ENCODE measurements at regions of chr3 and their contacts with region 1.

Region 1: DNA sequence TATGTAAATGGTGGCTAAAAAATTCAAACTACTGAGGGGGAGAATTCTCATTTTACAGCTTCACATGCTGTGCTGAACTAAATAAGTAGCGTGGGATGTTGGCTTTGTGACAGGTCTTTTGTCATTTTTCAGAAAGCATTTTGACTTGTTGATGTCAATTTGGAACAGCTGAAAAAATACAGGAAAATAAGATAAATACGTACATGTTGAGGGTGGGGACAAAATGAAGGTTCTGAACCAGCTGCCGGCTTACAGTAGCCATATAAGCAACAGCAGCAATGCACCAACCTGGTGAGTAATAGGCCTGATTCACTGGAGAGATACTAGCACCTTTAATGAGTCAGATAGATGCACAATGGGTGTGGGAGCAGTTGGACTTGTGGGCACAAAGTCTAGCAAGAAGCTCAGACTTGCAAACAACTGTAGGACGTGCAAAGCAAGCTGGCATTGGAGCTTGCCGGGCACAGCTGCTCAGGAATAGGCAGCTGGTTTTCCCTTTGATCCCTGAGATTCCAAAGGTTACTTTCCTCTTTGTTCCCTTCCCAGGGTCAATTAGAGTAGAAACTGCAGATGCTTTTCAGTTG is 12.9 kb downstream of the B3GNT5 start:
- DNase-seq: peak; percentile 75
- ATAC-seq: peak; percentile 98
- H3K4me3 Mint-ChIP-seq: no peak overlapping the region
- H3K27ac Mint-ChIP-seq: no peak overlapping the region
- H3K4me1 Mint-ChIP-seq: peaks cover 2% of the 10 kb centered on the region
- H3K27me3 Mint-ChIP-seq: no peaks in the 10 kb centered on the region

Region 2: GRCh38 chr3:182837855-182838454 is 428.0 kb before region 1 on chr3:
- CTCF ChIA-PET with region 1: no interaction called
- POLR2A ChIA-PET with region 1: no interaction called
- intact Hi-C with region 1: no loop called
- DNase-seq: no peak
- ATAC-seq: no peak
- H3K4me3 Mint-ChIP-seq: no peak overlapping the region
- H3K27ac Mint-ChIP-seq: no peak overlapping the region
- H3K4me1 Mint-ChIP-seq: peaks cover 6% of the 10 kb centered on the region
- H3K27me3 Mint-ChIP-seq: no peaks in the 10 kb centered on the region

Region 3: GRCh38 chr3:183158551-183159006 is 107.3 kb before region 1 on chr3:
- CTCF ChIA-PET with region 1: no interaction called
- POLR2A ChIA-PET with region 1: no interaction called
- intact Hi-C with region 1: loop called in 1 of 2 experiments (anchors 1 kb)
- DNase-seq: peak; percentile 68
- ATAC-seq: peak; percentile 64
- H3K4me3 Mint-ChIP-seq: no peak overlapping the region
- H3K27ac Mint-ChIP-seq: peak overlapping the region; percentile 62
- H3K4me1 Mint-ChIP-seq: peaks cover 34% of the 10 kb centered on the region
- H3K27me3 Mint-ChIP-seq: no peaks in the 10 kb centered on the region

Region 4: DNA sequence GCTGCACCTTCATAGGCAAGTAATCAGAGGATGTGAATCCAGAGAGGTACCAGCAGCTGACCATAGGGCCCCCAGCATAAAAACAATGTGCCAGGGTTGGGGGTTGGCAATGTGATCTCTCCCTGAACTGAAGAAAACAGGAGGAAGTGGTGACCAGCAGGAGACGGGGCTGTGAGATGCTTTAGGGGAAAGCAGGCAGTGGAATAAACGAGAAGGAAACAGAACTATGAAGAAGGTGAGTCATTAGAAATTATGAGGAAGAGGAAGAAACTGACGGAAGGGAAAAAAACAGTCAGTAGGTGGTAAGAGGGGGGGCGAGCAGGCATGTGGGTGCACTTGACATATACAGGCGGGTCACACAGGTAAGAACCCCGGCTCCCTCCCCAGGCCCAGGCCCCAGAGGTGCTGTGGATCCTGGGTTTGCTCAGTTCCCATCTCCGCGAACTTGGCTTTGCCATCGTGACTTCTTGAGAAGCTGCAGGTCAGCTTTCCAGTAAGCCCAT is 55.0 kb before region 1 on chr3:
- CTCF ChIA-PET with region 1: interaction called, 4 read pairs
- POLR2A ChIA-PET with region 1: no interaction called
- intact Hi-C with region 1: loop called (anchors 1 to 5 kb)
- DNase-seq: peak; percentile 68
- ATAC-seq: peak; percentile 66
- H3K4me3 Mint-ChIP-seq: no peak overlapping the region
- H3K27ac Mint-ChIP-seq: peak overlapping the region; percentile 72
- H3K4me1 Mint-ChIP-seq: peaks cover 63% of the 10 kb centered on the region
- H3K27me3 Mint-ChIP-seq: no peaks in the 10 kb centered on the region

Region 5: GRCh38 chr3:183224180-183224970 is 41.6 kb before region 1 on chr3:
- CTCF ChIA-PET with region 1: interaction called, 3 read pairs
- POLR2A ChIA-PET with region 1: no interaction called
- intact Hi-C with region 1: loop called (anchors 1 to 5 kb)
- DNase-seq: peak; percentile 71
- ATAC-seq: peak; percentile 96
- H3K4me3 Mint-ChIP-seq: peak overlapping the region; percentile 52
- H3K27ac Mint-ChIP-seq: peak overlapping the region; percentile 77
- H3K4me1 Mint-ChIP-seq: peaks cover 36% of the 10 kb centered on the region
- H3K27me3 Mint-ChIP-seq: no peaks in the 10 kb centered on the region

Region 6: DNA sequence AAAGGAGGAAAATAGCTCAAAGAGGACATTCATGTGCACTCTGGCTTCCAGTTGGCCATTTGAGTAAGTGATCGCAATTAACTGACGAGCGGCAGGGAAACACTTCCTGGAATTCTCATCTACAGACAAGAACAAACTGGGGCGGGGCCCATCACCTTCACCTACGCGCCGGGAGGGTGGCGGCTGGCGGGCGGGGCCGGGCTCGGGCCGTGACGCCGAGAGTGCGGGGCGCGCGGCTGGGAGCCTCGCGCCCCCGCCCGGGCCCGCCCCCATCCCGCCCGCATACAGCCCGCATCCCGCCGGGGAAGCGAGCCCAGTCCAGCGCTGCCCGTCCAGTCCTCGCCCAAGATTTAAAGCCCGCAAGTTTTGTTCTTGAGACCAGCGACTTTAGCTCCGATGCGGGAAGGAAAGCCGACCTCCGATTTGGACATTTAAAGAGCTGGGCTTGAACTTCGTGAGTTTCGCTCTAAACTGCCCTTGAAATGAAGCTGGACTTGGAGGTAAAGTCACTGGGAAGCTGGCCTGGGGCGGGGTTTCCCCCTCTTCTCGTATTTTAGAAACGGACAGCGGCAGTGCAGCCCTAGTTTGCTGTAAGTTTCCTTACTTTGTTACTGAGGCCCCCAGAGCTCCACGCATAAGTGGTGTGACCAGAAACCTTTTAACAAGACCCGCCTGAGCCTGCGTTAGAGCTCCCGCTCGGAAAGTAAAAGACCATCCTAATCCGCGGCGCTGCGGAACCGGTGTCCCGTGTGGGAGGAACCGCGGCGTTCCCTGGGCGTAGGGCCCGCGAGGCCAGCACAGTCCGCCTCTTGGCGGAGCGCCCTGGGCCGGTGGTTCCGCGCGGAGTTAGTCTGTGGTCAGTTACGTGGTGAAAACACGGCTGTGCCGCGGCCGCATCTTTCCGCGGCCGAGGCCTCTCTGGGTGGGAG is 12.7 kb before region 1 on chr3 and contains the start of gene B3GNT5:
- CTCF ChIA-PET with region 1: interaction called, 4 read pairs
- POLR2A ChIA-PET with region 1: interaction called, 11 read pairs
- intact Hi-C with region 1: loop called (anchors 1 kb)
- DNase-seq: peak; percentile 76
- ATAC-seq: peak; percentile 56
- H3K4me3 Mint-ChIP-seq: peak within 1 kb of the TSS; percentile 77
- H3K27ac Mint-ChIP-seq: peak within 1 kb of the TSS; percentile 79
- H3K4me1 Mint-ChIP-seq: peaks cover 29% of the 10 kb centered on the region
- H3K27me3 Mint-ChIP-seq: peaks cover 14% of the 10 kb centered on the region
- total RNA-seq, gene B3GNT5: 20.2 to 22.8 TPM

Region 7: GRCh38 chr3:183306798-183307671 is 41.1 kb after region 1 on chr3:
- CTCF ChIA-PET with region 1: no interaction called
- POLR2A ChIA-PET with region 1: no interaction called
- intact Hi-C with region 1: loop called in 1 of 2 experiments (anchors 1 kb)
- DNase-seq: peak; percentile 72
- ATAC-seq: peak; percentile 98
- H3K4me3 Mint-ChIP-seq: no peak overlapping the region
- H3K27ac Mint-ChIP-seq: peak overlapping the region; percentile 78
- H3K4me1 Mint-ChIP-seq: peaks cover 29% of the 10 kb centered on the region
- H3K27me3 Mint-ChIP-seq: no peaks in the 10 kb centered on the region

Region 8: GRCh38 chr3:183377307-183377959 is 111.5 kb after region 1 on chr3:
- CTCF ChIA-PET with region 1: interaction called, 6 read pairs
- POLR2A ChIA-PET with region 1: no interaction called
- intact Hi-C with region 1: loop called (anchors 5 kb)
- DNase-seq: peak; percentile 24
- ATAC-seq: peak; percentile 77
- H3K4me3 Mint-ChIP-seq: no peak overlapping the region
- H3K27ac Mint-ChIP-seq: peak overlapping the region; percentile 58
- H3K4me1 Mint-ChIP-seq: peaks cover 43% of the 10 kb centered on the region
- H3K27me3 Mint-ChIP-seq: no peaks in the 10 kb centered on the region

Region 9: DNA sequence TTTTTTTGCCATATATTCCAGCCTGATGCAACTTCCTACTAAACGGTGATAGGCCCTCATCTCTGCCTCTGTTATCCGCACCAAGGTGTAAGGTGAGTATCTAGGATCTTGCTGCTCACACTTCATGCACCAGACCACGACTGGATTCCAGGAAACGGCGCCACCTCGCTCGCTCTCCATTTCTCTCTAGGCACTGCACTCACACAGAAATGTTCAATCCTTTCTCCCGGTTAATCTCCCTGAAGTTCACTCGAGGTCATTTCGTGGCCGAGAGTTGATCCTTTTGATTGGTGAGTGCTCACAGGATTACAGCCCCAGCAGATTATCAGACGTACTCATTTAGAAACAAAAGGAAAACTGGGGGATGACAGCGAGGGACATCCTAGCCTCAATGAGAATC is 134.4 kb after region 1 on chr3:
- CTCF ChIA-PET with region 1: no interaction called
- POLR2A ChIA-PET with region 1: no interaction called
- intact Hi-C with region 1: no loop called
- DNase-seq: no peak
- ATAC-seq: no peak
- H3K4me3 Mint-ChIP-seq: no peak overlapping the region
- H3K27ac Mint-ChIP-seq: no peak overlapping the region
- H3K4me1 Mint-ChIP-seq: peaks cover 7% of the 10 kb centered on the region
- H3K27me3 Mint-ChIP-seq: no peaks in the 10 kb centered on the region

Measured in activated CD4-positive, alpha-beta T cell treated with anti-CD3 and anti-CD28 coated beads for 36 hours (primary cell).